Vagina (tissue), 2 donors: ENCODE measurements at regions of chr6 and their contacts with region 1.

Region 1: GRCh38 chr6:169224185-169224695 is 29.4 kb downstream of the THBS2 start:
- DNase-seq: peak in 1 of 2 donors; percentile 90
- H3K4me3 ChIP-seq: no peak overlapping the region
- H3K27ac ChIP-seq: peak overlapping the region; percentile 75
- H3K4me1 ChIP-seq: peaks cover 20% of the 10 kb centered on the region
- H3K27me3 ChIP-seq: no peaks in the 10 kb centered on the region
- CTCF ChIP-seq: no peak
- POLR2A ChIP-seq: no peak

Region 2: GRCh38 chr6:167826230-167826895 is 1397.9 kb before region 1 on chr6:
- intact Hi-C with region 1: loop called (anchors 5 kb)
- DNase-seq: no peak
- H3K4me3 ChIP-seq: peak overlapping the region; percentile 61 to 78
- H3K27ac ChIP-seq: peak overlapping the region; percentile 72
- H3K4me1 ChIP-seq: peaks cover 16% of the 10 kb centered on the region
- H3K27me3 ChIP-seq: no peaks in the 10 kb centered on the region
- CTCF ChIP-seq: peak in 1 of 3 experiments; percentile 40
- POLR2A ChIP-seq: no peak

Region 3: DNA sequence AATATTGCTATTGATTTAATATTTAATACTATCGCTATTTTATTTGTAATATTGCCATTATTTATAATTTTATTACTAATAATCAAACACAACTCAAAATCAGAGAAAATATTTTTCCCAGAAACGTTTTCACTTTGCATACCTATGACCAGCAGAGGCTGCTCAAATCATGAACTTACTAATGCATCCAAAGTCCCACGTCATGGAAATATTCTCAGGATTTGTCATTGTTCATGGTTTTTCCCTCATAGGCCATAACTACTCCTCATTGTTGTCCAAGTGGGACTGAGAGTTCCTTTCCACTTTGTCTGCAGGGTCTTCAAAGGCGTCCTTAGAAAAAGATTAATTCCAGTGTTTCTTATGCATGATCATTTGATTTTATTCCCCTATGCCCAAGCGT is 315.4 kb before region 1 on chr6:
- intact Hi-C with region 1: no loop called
- DNase-seq: no peak
- H3K4me3 ChIP-seq: no peak overlapping the region
- H3K27ac ChIP-seq: no peak overlapping the region
- H3K4me1 ChIP-seq: no peaks in the 10 kb centered on the region
- H3K27me3 ChIP-seq: no peaks in the 10 kb centered on the region
- CTCF ChIP-seq: peak in 1 of 3 experiments; percentile 15
- POLR2A ChIP-seq: no peak